Breast epithelium (tissue), 4 donors: ENCODE measurements at regions of chr6 and their contacts with region 1.

Region 1: DNA sequence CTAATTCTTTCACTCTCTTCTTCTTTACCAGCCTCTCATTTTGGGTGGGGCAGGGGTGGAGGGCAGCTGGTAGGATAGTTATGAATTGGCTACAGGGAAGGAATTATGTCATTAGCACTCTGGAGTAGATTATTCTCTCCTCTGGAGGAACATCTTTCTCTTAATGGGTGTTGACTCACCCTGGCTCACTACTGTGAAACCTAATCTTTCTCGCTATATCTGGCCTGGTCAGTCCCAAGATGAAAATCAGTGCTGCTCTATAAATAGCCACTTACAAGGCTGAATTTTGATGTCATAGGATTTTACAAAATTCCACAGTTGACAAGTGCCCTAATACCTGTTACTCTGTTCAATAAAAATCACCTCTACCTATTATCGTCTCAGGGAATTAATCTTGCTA is 151.3 kb downstream of the COL9A1 start:
- DNase-seq: no peak
- H3K4me3 ChIP-seq: no peak overlapping the region
- H3K27ac ChIP-seq: no peak overlapping the region
- H3K4me1 ChIP-seq: no peaks in the 10 kb centered on the region
- H3K27me3 ChIP-seq: no peaks in the 10 kb centered on the region
- CTCF ChIP-seq: no peak
- POLR2A ChIP-seq: no peak

Region 2: GRCh38 chr6:70954750-70955149 is 803.1 kb after region 1 on chr6:
- intact Hi-C with region 1: loop called (anchors 5 kb)
- DNase-seq: no peak
- H3K4me3 ChIP-seq: no peak overlapping the region
- H3K27ac ChIP-seq: no peak overlapping the region
- H3K4me1 ChIP-seq: peaks cover 0 to 4% of the 10 kb centered on the region in 2 donors
- H3K27me3 ChIP-seq: peaks cover 0 to 7% of the 10 kb centered on the region in 2 donors
- CTCF ChIP-seq: no peak
- POLR2A ChIP-seq: no peak

Region 3: GRCh38 chr6:71134929-71135642 is 983.5 kb after region 1 on chr6:
- intact Hi-C with region 1: no loop called
- DNase-seq: no peak
- H3K4me3 ChIP-seq: no peak overlapping the region
- H3K27ac ChIP-seq: no peak overlapping the region
- H3K4me1 ChIP-seq: no peaks in the 10 kb centered on the region
- H3K27me3 ChIP-seq: no peaks in the 10 kb centered on the region
- CTCF ChIP-seq: no peak
- POLR2A ChIP-seq: no peak